ENCODE measurements at regions of chr3 and their contacts with region 1.

Region 1: DNA sequence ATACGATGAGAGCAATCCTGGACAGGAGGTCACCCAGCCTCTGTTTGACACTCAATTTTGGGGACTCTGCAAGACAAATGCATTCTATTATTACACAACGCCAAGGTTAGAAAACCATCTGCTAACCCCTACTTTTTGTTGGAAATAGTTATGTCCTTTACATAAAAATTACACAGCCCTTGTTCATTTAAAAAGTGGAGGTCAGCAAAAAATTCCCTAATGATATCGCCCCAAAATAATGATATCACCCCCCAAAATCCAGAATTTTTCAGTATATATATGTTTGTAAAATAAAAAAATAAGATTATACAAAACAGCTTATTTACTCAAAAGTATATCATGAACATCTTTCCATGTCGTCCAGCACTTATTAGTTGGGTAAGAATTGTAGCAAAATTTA is 11.4 kb downstream of the ROPN1 start:
- DNase-seq: no peak
- H3K4me3 Mint-ChIP-seq: no peak overlapping the region
- H3K27ac Mint-ChIP-seq: no peak overlapping the region
- H3K4me1 Mint-ChIP-seq: no peaks in the 10 kb centered on the region
- H3K27me3 Mint-ChIP-seq: peaks cover 23% of the 10 kb centered on the region

Region 2: GRCh38 chr3:123595396-123596180 is 385.0 kb before region 1 on chr3:
- CTCF ChIA-PET with region 1: no interaction called
- intact Hi-C with region 1: no loop called
- DNase-seq: no peak
- H3K4me3 Mint-ChIP-seq: no peak overlapping the region
- H3K27ac Mint-ChIP-seq: no peak overlapping the region
- H3K4me1 Mint-ChIP-seq: no peaks in the 10 kb centered on the region
- H3K27me3 Mint-ChIP-seq: no peaks in the 10 kb centered on the region

Region 3: DNA sequence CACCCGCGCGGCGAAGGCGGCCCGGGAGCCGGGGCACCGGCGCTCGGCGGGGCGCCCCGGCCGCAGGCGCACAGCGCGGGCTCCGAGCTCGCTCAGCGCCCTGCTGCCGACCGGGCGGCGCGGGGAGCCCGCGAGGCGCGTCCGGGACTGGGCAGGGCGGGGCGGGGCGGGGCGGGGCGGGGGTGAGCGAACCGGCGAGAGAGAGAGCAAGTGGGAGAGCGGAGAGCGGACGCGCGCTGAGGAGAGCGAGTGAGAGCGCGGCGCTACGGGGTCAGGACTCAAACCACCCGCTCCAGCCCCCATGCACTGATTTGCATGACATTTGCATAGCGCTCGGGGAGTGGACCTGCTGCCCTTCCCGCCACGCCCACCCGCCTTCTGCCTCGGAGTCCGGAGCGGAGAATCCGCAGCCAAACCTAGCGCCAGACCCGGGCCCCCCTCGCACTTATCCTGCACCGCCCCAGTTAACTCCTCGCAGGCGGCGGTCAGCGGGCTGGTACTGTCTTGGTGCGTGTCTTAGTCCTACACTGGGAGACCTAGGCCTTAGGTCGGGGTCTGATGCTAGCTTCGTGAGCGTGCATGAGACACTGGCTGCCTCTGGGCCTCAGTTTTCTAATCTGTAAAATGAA is 96.2 kb before region 1 on chr3 and contains the start of gene MYLK:
- CTCF ChIA-PET with region 1: no interaction called
- intact Hi-C with region 1: no loop called
- DNase-seq: peak; percentile 53
- H3K4me3 Mint-ChIP-seq: peak within 1 kb of the TSS; percentile 67
- H3K27ac Mint-ChIP-seq: no peak within 1 kb of the TSS
- H3K4me1 Mint-ChIP-seq: peaks cover 11% of the 10 kb centered on the region
- H3K27me3 Mint-ChIP-seq: peaks cover 57% of the 10 kb centered on the region
- total RNA-seq, gene MYLK: not detected

Region 4: GRCh38 chr3:123953735-123954134 is 26.8 kb before region 1 on chr3:
- CTCF ChIA-PET with region 1: no interaction called
- intact Hi-C with region 1: loop called (anchors 2 kb)
- DNase-seq: no peak
- H3K4me3 Mint-ChIP-seq: no peak overlapping the region
- H3K27ac Mint-ChIP-seq: no peak overlapping the region
- H3K4me1 Mint-ChIP-seq: peaks cover 5% of the 10 kb centered on the region
- H3K27me3 Mint-ChIP-seq: no peaks in the 10 kb centered on the region

Region 5: DNA sequence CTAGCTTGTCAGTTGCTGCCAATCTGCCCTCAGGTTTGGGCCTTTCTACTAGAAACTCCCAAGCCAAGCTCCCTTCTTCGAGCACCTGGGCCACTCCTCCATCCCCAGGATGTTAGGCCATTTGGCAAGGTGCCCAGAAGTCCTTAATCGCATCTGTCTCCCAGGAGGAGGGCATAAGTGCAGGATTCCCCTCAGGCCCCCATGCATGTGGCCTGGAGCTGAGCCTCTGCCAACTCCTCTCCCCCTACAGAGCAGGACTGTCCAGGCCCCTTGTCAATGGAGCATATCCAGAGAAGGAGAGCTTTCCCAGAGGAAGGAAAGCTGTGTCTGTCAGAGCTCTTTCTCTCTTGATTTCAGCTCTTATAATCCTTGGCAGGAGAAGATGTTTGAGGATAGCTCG is 193.9 kb after region 1 on chr3:
- CTCF ChIA-PET with region 1: no interaction called
- intact Hi-C with region 1: no loop called
- DNase-seq: no peak
- H3K4me3 Mint-ChIP-seq: no peak overlapping the region
- H3K27ac Mint-ChIP-seq: no peak overlapping the region
- H3K4me1 Mint-ChIP-seq: no peaks in the 10 kb centered on the region
- H3K27me3 Mint-ChIP-seq: peaks cover 5% of the 10 kb centered on the region